Activated CD8-positive, alpha-beta T cell treated with anti-CD3 and anti-CD28 coated beads, Interleukin-2, amount 10 ng/mL, durations not matched to agents 7 days and 5 days (primary cell): ENCODE measurements at regions of chr4 and their contacts with region 1.

Region 1: GRCh38 chr4:16225863-16226815 is at the start of gene TAPT1:
- DNase-seq: peak; percentile 77
- ATAC-seq: peak; percentile 77
- H3K4me3 Mint-ChIP-seq: peak within 1 kb of the TSS; percentile 92
- H3K27ac Mint-ChIP-seq: peak within 1 kb of the TSS; percentile 95
- H3K4me1 Mint-ChIP-seq: peaks cover 48% of the 10 kb centered on the region
- H3K27me3 Mint-ChIP-seq: no peaks in the 10 kb centered on the region
- total RNA-seq, gene TAPT1: 31.9 to 34.3 TPM

Region 2: GRCh38 chr4:16183604-16184003 is 42.5 kb before region 1 on chr4:
- CTCF ChIA-PET with region 1: no interaction called
- POLR2A ChIA-PET with region 1: no interaction called
- DNase-seq: no peak
- ATAC-seq: no peak
- H3K4me3 Mint-ChIP-seq: no peak overlapping the region
- H3K27ac Mint-ChIP-seq: no peak overlapping the region
- H3K4me1 Mint-ChIP-seq: no peaks in the 10 kb centered on the region
- H3K27me3 Mint-ChIP-seq: no peaks in the 10 kb centered on the region

Region 3: DNA sequence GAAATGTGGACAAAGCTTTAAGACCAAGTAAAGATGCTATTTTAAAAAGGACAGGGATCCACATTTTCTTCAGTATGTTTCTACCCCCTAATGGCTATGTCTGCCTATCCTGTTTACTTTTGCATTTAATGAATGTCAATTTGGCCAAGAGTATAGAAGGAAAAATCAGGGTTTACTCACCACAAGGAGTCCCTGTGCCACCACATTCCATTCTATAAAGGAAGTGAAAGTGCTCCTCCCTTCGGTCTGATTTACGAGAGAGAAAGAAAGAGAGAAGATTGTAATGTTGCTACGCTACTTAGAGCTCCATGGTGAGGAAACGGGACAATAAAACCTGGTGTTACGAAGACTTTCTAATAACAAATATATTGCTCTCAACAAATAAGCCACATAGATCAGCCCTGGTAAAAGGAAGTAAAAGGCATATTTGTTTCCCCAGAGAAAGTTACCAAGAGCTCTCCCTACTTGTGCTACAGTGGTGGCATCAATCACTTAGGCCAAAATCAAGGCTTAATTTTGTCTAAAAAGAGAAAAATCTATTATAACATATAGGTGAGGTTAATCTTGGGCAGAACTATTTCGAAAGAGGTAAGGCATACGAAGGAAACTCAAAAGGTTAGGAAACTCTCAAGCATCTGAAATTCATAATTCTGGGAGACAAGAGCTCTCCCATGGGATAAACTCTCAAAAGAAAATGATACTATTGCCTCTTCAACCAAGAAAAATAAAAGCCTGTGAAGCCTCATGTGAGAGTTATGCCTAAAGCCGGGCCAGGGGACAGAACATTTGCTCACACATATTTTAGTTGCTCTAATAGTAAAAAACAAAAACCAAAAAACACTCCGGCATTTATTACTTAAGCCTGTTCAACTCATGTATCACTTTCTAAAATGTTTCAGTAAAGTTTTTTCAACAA is 29.4 kb before region 1 on chr4:
- CTCF ChIA-PET with region 1: interaction called, 13 read pairs
- POLR2A ChIA-PET with region 1: interaction called, 4 read pairs
- DNase-seq: no peak
- ATAC-seq: no peak
- H3K4me3 Mint-ChIP-seq: no peak overlapping the region
- H3K27ac Mint-ChIP-seq: no peak overlapping the region
- H3K4me1 Mint-ChIP-seq: peaks cover 16% of the 10 kb centered on the region
- H3K27me3 Mint-ChIP-seq: no peaks in the 10 kb centered on the region

Region 4: DNA sequence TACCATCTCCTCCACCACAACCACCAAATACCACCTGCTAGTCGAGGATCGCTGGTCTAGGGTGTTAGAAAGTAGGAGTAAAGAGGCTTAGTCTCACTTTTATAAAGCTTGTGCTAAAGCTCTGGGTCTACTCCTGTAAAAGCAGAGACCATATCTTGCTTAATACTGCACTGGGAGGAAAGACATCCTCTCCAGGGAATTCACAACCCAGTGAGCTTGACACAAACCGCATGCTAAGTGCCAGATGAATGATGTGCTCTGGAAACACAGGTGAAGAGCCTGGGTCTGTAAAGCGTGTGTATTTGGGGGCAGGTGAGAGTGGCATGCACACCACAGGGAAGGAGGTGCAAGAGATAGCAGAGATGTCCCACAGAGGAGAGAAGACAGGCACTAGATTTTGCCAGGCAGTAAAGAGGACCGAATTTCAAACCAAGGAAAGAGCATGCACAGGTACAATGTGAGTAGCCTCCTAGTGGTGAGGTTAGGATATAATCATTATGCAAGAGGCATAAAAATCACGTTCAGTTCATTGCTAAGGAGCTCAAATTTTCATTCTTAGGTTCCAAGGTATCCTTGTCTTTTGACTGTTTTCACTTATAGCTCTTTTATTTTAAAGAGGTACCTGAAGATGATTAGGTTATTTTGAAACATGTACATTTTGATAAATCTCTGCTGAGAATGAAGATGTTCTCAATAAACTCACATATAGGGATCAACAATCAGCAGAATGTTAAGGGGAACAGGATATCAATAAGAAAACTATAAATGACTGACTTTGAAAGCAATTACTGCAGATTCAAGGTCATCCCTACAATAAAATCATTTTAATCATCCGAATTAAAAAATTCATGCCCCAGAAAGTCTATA is 20.6 kb before region 1 on chr4:
- CTCF ChIA-PET with region 1: interaction called, 13 read pairs
- POLR2A ChIA-PET with region 1: interaction called, 4 read pairs
- DNase-seq: no peak
- ATAC-seq: peak; percentile 82
- H3K4me3 Mint-ChIP-seq: no peak overlapping the region
- H3K27ac Mint-ChIP-seq: no peak overlapping the region
- H3K4me1 Mint-ChIP-seq: peaks cover 26% of the 10 kb centered on the region
- H3K27me3 Mint-ChIP-seq: no peaks in the 10 kb centered on the region

Region 5: DNA sequence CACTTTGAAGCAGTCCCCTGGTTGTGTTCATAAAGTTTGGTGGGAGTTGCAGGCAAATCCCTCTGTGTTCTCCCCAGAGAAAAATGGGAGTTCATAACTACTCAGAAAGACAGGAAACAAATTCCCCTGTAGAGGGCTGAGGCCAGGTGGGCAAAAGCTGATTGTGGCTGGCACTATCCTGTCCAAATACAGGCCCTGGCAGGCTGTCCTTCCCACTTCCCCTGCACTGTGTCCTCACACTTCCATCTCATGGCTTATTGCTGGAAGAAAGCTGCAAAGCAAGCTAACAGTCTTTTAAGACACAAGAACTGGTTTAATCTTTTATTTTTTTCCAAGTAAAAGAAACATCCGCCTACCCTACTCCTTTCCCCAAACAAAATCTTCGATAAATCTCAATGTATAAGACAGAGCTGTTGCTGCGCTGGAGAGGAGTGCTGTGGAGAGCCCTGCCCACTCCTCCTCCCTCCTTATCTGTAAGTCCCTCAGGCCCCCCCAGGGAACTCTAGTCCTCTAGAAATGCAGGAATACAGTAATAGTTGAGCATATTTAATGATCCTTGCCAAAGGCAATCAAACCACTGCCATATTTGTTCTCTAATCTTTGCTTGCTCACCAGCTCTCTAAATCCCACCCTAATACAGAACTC is 13.9 kb before region 1 on chr4:
- CTCF ChIA-PET with region 1: interaction called, 12 read pairs
- POLR2A ChIA-PET with region 1: interaction called, 5 read pairs
- DNase-seq: no peak
- ATAC-seq: no peak
- H3K4me3 Mint-ChIP-seq: no peak overlapping the region
- H3K27ac Mint-ChIP-seq: no peak overlapping the region
- H3K4me1 Mint-ChIP-seq: peaks cover 48% of the 10 kb centered on the region
- H3K27me3 Mint-ChIP-seq: no peaks in the 10 kb centered on the region